Posterior vena cava (tissue), 2 donors: ENCODE measurements at regions of chr3 and their contacts with region 1.

Region 1: DNA sequence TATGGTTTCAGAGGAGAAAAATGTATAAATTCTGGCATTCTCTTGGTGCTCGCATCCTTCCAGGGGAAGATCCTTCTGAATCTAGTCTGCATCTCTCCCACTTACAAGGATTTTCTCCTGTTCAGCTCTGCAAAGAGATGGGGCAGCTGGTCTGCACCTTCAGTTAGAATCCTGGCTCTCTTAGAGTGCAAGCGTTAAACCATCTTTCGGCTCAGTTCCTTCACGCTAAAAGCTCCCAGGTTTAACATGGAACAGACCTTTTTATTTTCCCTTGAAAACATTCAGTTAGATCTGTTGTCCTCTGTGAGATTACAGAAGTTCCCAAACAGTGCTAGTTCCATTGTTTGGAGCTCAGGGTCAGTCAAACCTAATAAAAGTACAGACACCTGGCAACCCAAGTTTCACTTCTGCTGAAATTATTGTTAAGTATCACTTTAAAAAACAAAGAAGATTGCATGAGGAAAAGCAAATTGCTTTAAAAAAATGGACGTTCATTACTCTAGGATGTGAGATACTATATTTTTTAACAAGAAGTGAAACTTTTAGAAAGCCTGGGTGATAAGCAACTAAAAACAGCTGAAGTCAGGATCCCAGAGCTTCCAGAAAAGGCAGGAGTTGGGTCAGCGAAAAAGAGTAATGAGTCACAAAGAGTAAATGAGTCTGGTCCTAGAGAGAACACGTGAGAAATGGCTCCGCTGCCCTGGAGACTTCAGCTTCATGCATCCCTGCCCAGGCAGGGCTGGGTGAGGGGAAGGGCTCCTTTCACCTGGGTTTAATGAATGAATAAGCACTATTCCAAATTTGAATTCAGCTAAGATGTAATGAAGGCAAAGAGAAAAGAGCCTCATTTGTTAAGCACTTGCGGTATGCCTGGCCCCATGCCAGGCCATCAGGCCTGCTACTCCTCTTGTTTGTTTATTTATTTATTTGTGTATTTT is 63.3 kb downstream of the ABTB1 start:
- DNase-seq: peak; percentile 75

Region 2: GRCh38 chr3:127672516-127673190 is 63.4 kb before region 1 on chr3 and contains the start of gene ABTB1:
- intact Hi-C with region 1: no loop called
- DNase-seq: peak; percentile 95
- total RNA-seq, gene ABTB1: 27.7 to 28.9 TPM

Region 3: GRCh38 chr3:127697551-127698240 is 38.3 kb before region 1 on chr3:
- intact Hi-C with region 1: loop called in 1 of 2 experiments (anchors 5 kb)
- DNase-seq: peak; percentile 94

Region 4: GRCh38 chr3:127750226-127751031 is 14.4 kb after region 1 on chr3:
- intact Hi-C with region 1: no loop called
- DNase-seq: peak; percentile 46

Region 5: DNA sequence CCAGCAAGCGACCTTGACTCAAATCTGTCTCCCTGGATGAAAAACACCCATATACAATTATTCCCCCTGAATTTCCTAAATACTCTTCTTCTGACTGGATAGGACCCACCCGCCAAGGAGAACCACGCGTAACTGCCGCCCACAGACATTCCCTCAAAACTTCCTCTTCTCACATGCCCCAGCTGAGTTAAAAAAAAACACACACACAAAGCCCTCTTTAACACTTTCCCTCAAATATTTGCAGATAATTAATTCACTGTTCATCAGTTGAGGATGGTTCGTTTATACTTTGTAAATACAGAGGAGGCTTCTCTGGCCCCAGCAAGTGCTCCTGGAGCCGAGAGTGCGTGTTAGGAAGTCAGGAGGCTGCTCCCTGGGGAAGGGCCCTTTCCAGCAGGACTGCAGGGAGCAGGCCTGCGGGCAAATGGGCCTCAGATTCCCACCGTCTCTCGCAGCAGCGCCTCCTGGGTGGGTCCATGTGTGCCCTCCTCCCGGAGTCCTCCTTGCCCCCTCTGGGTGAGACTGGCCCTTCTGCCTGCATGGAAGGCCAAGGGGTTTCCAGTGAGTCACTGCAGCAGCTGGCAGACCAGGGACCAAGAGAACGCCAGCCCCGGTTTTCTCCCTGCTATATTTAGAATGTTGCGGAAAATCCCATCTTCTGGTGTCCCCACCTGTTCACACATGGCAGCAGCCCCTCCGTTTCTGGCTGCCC is 39.5 kb after region 1 on chr3:
- intact Hi-C with region 1: no loop called
- DNase-seq: peak; percentile 80